ENCODE measurements at regions of chr6 and their contacts with region 1.

Region 1: GRCh38 chr6:157764178-157765033 is 58.6 kb upstream of the SNX9 start:
- DNase-seq: peak; percentile 66 to 92
- ATAC-seq: peak; percentile 82 to 88 (median 83)
- H3K4me3 ChIP-seq: peak overlapping the region; percentile 1
- H3K4me3 Mint-ChIP-seq: peak overlapping the region; percentile 83
- H3K27ac ChIP-seq: peak overlapping the region; percentile 56
- H3K27ac Mint-ChIP-seq: peak overlapping the region; percentile 78 to 95
- H3K4me1 ChIP-seq: peaks cover 50% of the 10 kb centered on the region
- H3K4me1 Mint-ChIP-seq: peaks cover 21 to 43% of the 10 kb centered on the region in 2 donors
- H3K27me3 ChIP-seq: no peaks in the 10 kb centered on the region
- H3K27me3 Mint-ChIP-seq: peaks cover 0 to 12% of the 10 kb centered on the region in 2 donors
- CTCF ChIP-seq: no peak

Region 2: GRCh38 chr6:157699777-157700636 is 64.4 kb before region 1 on chr6:
- intact Hi-C with region 1: no loop called
- DNase-seq: no peak
- ATAC-seq: no peak
- H3K4me3 ChIP-seq: no peak overlapping the region
- H3K4me3 Mint-ChIP-seq: no peak overlapping the region
- H3K27ac ChIP-seq: no peak overlapping the region
- H3K27ac Mint-ChIP-seq: no peak overlapping the region
- H3K4me1 ChIP-seq: no peaks in the 10 kb centered on the region
- H3K4me1 Mint-ChIP-seq: no peaks in the 10 kb centered on the region
- H3K27me3 ChIP-seq: no peaks in the 10 kb centered on the region
- H3K27me3 Mint-ChIP-seq: peaks cover 11 to 27% of the 10 kb centered on the region in 2 donors
- CTCF ChIP-seq: no peak

Region 3: DNA sequence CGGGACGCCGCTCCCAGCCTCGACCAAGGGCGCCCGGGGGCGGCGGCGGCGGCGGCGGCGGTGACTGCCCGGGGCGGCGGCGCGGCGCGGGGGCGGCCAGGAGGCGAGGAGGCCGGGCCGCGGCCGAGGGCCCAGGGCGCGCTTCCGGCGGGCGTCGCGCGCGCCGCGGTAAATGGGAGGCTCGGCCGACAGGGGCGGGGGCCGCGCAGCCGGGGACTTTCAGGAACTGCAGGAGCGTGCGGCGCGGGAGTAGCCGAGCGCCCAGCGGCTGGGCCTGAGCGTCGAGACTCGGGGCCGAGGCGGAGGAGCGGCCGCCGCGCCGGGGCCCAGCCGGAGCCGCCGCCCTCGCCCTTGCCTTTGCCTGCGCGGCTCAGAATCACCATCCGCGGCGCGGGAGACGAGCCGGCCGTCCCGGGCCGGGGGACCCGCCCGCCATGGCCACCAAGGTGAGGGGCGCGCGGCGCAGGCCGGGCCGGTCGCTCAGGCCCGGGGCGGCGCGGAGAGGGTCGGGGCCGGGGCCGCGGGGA is 58.7 kb after region 1 on chr6 and contains the start of gene SNX9:
- intact Hi-C with region 1: loop called (anchors 5 kb)
- DNase-seq: peak; percentile 51 to 82
- ATAC-seq: peak; percentile 84 to 87 (median 86)
- H3K4me3 ChIP-seq: peak within 1 kb of the TSS; percentile 63
- H3K4me3 Mint-ChIP-seq: peak within 1 kb of the TSS; percentile 97
- H3K27ac ChIP-seq: peak within 1 kb of the TSS; percentile 55
- H3K27ac Mint-ChIP-seq: peak within 1 kb of the TSS; percentile 77 to 89
- H3K4me1 ChIP-seq: peaks cover 15% of the 10 kb centered on the region
- H3K4me1 Mint-ChIP-seq: peaks cover 9 to 17% of the 10 kb centered on the region in 2 donors
- H3K27me3 ChIP-seq: peaks cover 10% of the 10 kb centered on the region
- H3K27me3 Mint-ChIP-seq: peaks cover 3 to 14% of the 10 kb centered on the region in 2 donors
- CTCF ChIP-seq: no peak
- total RNA-seq, gene SNX9: 6.0 to 9.7 (median 7.3) TPM

Region 4: GRCh38 chr6:158026054-158026900 is 261.9 kb after region 1 on chr6:
- intact Hi-C with region 1: loop called (anchors 5 kb)
- DNase-seq: peak; percentile 64 to 90
- ATAC-seq: peak; percentile 71 to 83 (median 78)
- H3K4me3 ChIP-seq: peak overlapping the region; percentile 26
- H3K4me3 Mint-ChIP-seq: peak overlapping the region; percentile 75
- H3K27ac ChIP-seq: peak overlapping the region; percentile 81
- H3K27ac Mint-ChIP-seq: peak overlapping the region; percentile 89 to 98
- H3K4me1 ChIP-seq: peaks cover 34% of the 10 kb centered on the region
- H3K4me1 Mint-ChIP-seq: peaks cover 29 to 35% of the 10 kb centered on the region in 2 donors
- H3K27me3 ChIP-seq: no peaks in the 10 kb centered on the region
- H3K27me3 Mint-ChIP-seq: no peaks in the 10 kb centered on the region
- CTCF ChIP-seq: peak; percentile 76

Measured in natural killer cell (primary cell).